ENCODE measurements at regions of chr17 and their contacts with region 1.

Region 1: DNA sequence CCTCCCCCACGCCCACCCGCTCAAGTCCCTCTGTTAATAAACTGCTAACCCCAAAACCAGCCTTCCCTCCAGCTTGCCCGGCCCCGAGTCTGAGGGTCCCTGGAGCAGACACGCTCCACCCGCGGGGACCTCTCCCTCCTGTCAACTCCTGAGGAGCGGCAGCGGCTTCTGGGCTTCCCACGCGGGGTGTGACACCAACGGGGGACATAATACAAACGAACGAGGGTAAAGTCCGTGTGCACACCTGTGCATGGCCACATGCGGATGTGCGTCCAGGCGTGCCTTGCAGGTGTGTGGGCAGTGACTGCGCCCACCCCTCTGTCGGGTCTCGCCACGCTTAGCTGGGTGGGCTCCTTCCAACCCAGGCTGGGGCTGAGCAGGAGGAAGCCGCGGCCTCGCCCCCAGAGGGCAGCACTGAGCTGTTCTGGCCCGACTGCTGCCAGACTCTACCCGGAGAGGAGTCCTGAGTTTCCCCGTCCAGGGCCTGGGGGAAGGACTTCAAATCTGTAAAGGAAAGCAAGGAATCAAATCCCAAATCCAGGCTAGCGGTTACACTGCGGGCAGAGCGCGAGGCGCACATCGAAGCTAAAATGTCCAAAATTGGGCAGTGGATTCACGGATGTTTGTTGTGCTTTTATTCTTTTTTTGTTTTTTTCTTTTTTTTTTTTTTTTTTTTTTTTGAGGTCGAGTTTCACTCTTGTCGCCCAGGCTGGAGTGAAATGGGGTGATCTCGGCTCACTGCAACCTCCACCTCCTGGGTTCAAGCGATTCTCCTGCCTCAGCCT is 24.2 kb upstream of the KRT17 start:
- DNase-seq: peak; percentile 83 to 91 (median 85)
- ATAC-seq: peak; percentile 90 to 96 (median 92)
- H3K4me3 ChIP-seq: peak overlapping the region in 11 of 12 donors; percentile 2 to 57 (median 45)
- H3K27ac ChIP-seq: peak overlapping the region in 2 of 12 donors; percentile 38 to 41
- H3K4me1 ChIP-seq: peaks cover 0 to 29% (median 8%) of the 10 kb centered on the region in 12 donors
- H3K27me3 ChIP-seq: no peaks in the 10 kb centered on the region
- CTCF ChIP-seq: peak; percentile 84 to 98 (median 92)
- POLR2A ChIP-seq: no peak

Region 2: DNA sequence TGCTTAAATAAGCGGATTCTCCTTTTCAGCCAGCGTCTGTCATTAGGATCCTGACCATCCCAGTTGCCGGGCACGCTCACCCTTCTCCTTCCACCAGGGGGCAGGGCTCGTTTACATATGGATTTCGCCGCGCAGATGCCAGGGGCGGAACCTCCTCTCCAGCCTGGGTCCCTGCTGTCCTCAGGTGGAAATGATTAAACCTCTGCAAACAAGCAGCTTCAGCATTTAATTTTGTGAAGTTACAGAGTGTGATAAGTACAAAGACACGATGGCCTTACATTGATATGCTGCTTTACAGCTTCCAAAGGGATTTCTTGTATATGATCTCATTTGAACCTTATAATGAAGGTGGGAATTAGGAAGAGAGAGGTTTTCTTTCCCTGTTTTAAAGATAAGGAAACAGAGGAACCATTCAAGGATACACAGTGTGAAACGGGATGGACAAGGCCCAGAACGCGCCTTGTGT is 845.0 kb before region 1 on chr17:
- intact Hi-C with region 1: loop called in 3 of 10 experiments (anchors 5 kb)
- DNase-seq: peak; percentile 65 to 78 (median 70)
- ATAC-seq: peak; percentile 61 to 90 (median 86)
- H3K4me3 ChIP-seq: no peak overlapping the region
- H3K27ac ChIP-seq: no peak overlapping the region
- H3K4me1 ChIP-seq: peaks cover 0 to 6% (median 1%) of the 10 kb centered on the region in 12 donors
- H3K27me3 ChIP-seq: peaks cover 0 to 37% (median 8%) of the 10 kb centered on the region in 9 donors
- CTCF ChIP-seq: peak; percentile 72 to 92 (median 83)
- POLR2A ChIP-seq: no peak

Region 3: GRCh38 chr17:40809721-40810421 is 838.7 kb before region 1 on chr17:
- intact Hi-C with region 1: loop called in 1 of 10 experiments (anchors 5 kb)
- DNase-seq: no peak
- ATAC-seq: peak; percentile 36 to 84 (median 76)
- H3K4me3 ChIP-seq: no peak overlapping the region
- H3K27ac ChIP-seq: peak overlapping the region in 9 of 12 donors; percentile 4 to 56 (median 25)
- H3K4me1 ChIP-seq: peaks cover 0 to 25% (median 16%) of the 10 kb centered on the region in 12 donors
- H3K27me3 ChIP-seq: peaks cover 0 to 43% (median 0%) of the 10 kb centered on the region in 9 donors
- CTCF ChIP-seq: no peak
- POLR2A ChIP-seq: no peak

Region 4: DNA sequence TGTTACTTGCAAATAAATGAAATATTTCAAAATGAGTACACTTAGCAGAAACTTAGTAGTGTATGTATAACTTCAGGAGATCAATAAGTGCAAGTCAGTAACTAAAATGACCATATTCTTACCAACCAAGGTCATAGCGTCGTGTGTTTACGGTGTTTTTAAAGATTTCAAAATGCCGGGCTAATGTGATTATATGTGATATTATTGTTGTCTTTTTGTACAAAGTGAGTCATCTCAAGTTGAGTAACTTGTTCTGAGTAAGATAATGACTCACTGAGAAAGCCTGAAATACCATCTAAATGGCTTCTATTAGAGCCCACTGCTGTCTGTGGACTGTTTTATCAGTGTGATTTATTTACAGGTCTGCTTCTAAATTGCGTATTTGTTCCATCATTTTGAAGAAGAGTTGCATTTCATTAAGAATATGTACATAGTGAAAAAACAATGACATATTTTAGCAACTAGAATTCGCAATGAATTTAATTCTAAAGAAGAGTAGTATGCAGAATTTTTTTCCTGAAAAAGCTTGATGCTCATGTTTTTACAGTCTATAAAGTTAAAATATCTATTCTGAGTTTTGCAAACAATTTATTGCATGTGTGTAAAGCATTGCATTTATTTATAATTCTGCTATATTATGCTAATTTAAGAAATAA is 794.3 kb before region 1 on chr17:
- intact Hi-C with region 1: loop called in 2 of 10 experiments (anchors 1 to 5 kb)
- DNase-seq: no peak
- ATAC-seq: no peak
- H3K4me3 ChIP-seq: no peak overlapping the region
- H3K27ac ChIP-seq: no peak overlapping the region
- H3K4me1 ChIP-seq: peaks cover 0 to 11% (median 2%) of the 10 kb centered on the region in 12 donors
- H3K27me3 ChIP-seq: peaks cover 0 to 10% (median 0%) of the 10 kb centered on the region in 9 donors
- CTCF ChIP-seq: no peak
- POLR2A ChIP-seq: no peak

Region 5: DNA sequence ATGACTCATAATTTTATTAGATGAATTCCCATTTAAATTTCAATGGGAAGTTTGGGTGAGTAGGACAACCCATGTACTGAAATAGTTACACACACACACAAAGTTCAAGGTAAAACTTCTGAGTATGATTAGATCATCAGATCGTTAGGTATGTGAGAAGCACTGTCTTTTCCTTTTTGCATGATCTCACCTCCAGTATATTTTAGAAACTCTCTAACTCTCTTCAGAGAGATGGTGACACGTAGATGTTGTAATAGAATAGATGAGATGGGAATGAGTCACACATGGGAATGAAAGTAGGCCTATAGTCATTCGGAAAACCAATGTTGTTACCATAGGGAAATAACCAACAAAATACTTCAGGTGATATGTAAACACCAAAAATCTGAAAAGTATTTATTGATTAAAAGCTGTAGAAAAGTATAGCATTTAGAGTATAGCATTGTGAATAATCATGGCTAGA is 733.4 kb before region 1 on chr17:
- intact Hi-C with region 1: loop called in 1 of 10 experiments (anchors 10 kb)
- DNase-seq: no peak
- ATAC-seq: no peak
- H3K4me3 ChIP-seq: no peak overlapping the region
- H3K27ac ChIP-seq: no peak overlapping the region
- H3K4me1 ChIP-seq: peaks cover 0 to 9% (median 0%) of the 10 kb centered on the region in 12 donors
- H3K27me3 ChIP-seq: no peaks in the 10 kb centered on the region
- CTCF ChIP-seq: no peak
- POLR2A ChIP-seq: no peak

Region 6: GRCh38 chr17:41579484-41580243 is 68.9 kb before region 1 on chr17:
- intact Hi-C with region 1: loop called in 8 of 10 experiments (anchors 1 to 10 kb)
- DNase-seq: peak; percentile 59 to 71 (median 65)
- ATAC-seq: peak; percentile 79 to 88 (median 86)
- H3K4me3 ChIP-seq: no peak overlapping the region
- H3K27ac ChIP-seq: no peak overlapping the region
- H3K4me1 ChIP-seq: no peaks in the 10 kb centered on the region
- H3K27me3 ChIP-seq: peaks cover under 1 to 44% (median 5%) of the 10 kb centered on the region in 9 donors
- CTCF ChIP-seq: peak; percentile 53 to 84 (median 74)
- POLR2A ChIP-seq: no peak

Region 7: DNA sequence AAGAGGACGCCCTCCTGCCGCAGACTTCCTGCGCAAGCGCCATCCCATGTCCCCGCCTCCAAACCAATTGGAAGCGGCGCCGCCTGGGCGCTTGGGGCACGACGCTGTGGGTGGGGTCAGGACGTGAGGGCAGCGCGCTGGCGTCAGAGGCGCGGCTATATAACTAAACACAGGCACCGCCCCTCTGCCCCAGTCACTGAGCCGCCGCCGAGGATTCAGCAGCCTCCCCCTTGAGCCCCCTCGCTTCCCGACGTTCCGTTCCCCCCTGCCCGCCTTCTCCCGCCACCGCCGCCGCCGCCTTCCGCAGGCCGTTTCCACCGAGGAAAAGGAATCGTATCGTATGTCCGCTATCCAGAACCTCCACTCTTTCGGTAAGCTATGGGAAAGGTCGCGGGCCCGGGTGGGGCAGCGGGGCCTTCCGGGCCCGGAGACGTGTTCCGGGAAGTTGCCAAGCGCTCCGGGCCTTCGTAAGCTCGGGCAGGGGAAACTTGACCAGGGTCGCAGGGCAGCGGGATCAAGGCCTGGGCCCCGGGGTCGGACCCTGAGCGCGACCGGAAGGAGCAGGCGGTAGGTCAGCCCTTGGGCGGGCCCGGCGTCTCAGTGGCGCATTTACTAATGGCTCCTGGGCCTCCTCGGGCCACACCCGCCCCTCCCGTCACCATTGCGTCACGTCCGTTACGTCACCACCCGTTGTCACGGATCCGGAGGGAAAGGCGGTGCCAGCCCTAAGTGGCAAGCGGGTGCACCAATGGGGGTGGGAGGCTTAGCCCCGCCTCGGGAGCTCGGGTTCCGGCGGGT is 40.3 kb after region 1 on chr17 and contains the start of gene EIF1:
- intact Hi-C with region 1: no loop called
- DNase-seq: peak; percentile 100
- ATAC-seq: peak; percentile 89 to 91 (median 90)
- H3K4me3 ChIP-seq: peak within 1 kb of the TSS; percentile 56 to 99 (median 87)
- H3K27ac ChIP-seq: peak within 1 kb of the TSS; percentile 99 to 100 (median 100)
- H3K4me1 ChIP-seq: peaks cover 11 to 38% (median 32%) of the 10 kb centered on the region in 12 donors
- H3K27me3 ChIP-seq: no peaks in the 10 kb centered on the region
- CTCF ChIP-seq: no peak
- POLR2A ChIP-seq: peak; percentile 91 to 100
- total RNA-seq, gene EIF1: 402 to 1,338 (median 1,177) TPM

Measured in heart left ventricle (tissue), 16 donors.